Testis (tissue), 5 donors: ENCODE measurements at regions of chr5 and their contacts with region 1.

Region 1: GRCh38 chr5:178732281-178732680 is 1.8 kb upstream of the ZNF354A start:
- DNase-seq: no peak
- H3K4me3 ChIP-seq: no peak overlapping the region
- H3K27ac ChIP-seq: no peak overlapping the region
- H3K4me1 ChIP-seq: no peaks in the 10 kb centered on the region
- H3K27me3 ChIP-seq: no peaks in the 10 kb centered on the region
- CTCF ChIP-seq: no peak
- POLR2A ChIP-seq: no peak

Region 2: GRCh38 chr5:178515776-178516503 is 216.3 kb before region 1 on chr5:
- intact Hi-C with region 1: no loop called
- DNase-seq: peak; percentile 7
- H3K4me3 ChIP-seq: no peak overlapping the region
- H3K27ac ChIP-seq: no peak overlapping the region
- H3K4me1 ChIP-seq: no peaks in the 10 kb centered on the region
- H3K27me3 ChIP-seq: no peaks in the 10 kb centered on the region
- CTCF ChIP-seq: no peak
- POLR2A ChIP-seq: no peak

Region 3: GRCh38 chr5:179060116-179061008 is 328.1 kb after region 1 on chr5 and contains the start of gene ZNF354C:
- intact Hi-C with region 1: loop called (anchors 5 kb)
- DNase-seq: peak; percentile 93
- H3K4me3 ChIP-seq: peak within 1 kb of the TSS; percentile 69 to 85
- H3K27ac ChIP-seq: peak within 1 kb of the TSS; percentile 59 to 75
- H3K4me1 ChIP-seq: peaks cover 8% of the 10 kb centered on the region
- H3K27me3 ChIP-seq: no peaks in the 10 kb centered on the region
- CTCF ChIP-seq: no peak
- POLR2A ChIP-seq: no peak
- total RNA-seq, gene ZNF354C: 4.6 to 4.8 TPM